ENCODE measurements at regions of chr4 and their contacts with region 1.

Region 1: DNA sequence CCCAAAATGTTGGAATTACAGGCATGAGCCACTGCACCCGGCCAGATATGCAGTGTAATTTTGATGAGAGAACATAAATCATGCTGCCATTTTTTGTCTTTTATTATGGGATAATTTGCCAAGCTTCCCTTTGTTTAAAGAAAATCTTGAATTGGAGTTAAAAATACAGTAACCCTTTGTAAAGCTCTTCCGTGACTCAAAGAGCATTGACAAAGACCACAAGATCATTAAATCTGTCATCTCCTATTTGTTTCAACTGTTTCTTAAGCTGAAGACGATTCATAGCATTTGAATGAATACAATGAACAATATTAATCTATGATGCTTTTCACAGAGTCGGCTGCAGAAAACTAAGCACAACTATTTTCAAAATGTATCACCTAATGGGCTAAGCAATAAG is 132.6 kb downstream of the ANAPC4 start:
- DNase-seq: no peak
- H3K4me3 ChIP-seq: no peak overlapping the region
- H3K27ac ChIP-seq: no peak overlapping the region
- H3K4me1 ChIP-seq: no peaks in the 10 kb centered on the region
- H3K27me3 ChIP-seq: no peaks in the 10 kb centered on the region
- CTCF ChIP-seq: no peak

Region 2: DNA sequence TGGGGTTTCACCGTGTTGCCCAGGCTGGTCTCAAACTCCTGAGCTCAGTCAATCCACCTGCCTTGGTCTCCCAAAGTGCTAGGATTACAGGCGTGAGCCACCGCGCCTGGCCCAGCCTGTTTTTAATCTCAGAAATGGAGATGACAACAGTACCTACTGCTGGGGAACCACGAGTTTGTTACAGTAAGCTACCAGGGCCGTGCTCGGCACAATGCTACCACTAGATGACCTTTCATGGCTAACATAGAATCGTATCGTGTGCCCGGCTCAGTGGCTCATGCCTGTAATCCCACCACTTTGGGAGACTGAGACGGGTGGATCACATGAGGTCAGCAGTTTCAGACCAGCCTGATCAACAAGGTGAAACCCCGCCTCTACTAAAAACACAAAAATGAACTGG is 55.2 kb after region 1 on chr4:
- CTCF ChIA-PET with region 1: no interaction called
- dilution Hi-C with region 1: loop called (anchors 5 kb)
- in situ Hi-C with region 1: no loop called
- intact Hi-C with region 1: no loop called
- DNase-seq: no peak
- H3K4me3 ChIP-seq: no peak overlapping the region
- H3K27ac ChIP-seq: no peak overlapping the region
- H3K4me1 ChIP-seq: no peaks in the 10 kb centered on the region
- H3K27me3 ChIP-seq: no peaks in the 10 kb centered on the region
- CTCF ChIP-seq: no peak

Measured in mammary epithelial cell (primary cell).